Adrenal gland (tissue), 19 donors: ENCODE measurements at regions of chr10 and their contacts with region 1.

Region 1: GRCh38 chr10:12720217-12720981 is 281.1 kb downstream of the CCDC3 start:
- DNase-seq: peak; percentile 44 to 91 (median 80)
- H3K4me3 ChIP-seq: no peak overlapping the region
- H3K27ac ChIP-seq: peak overlapping the region in 2 of 5 donors; percentile 3 to 57
- H3K4me1 ChIP-seq: peaks cover 9 to 22% of the 10 kb centered on the region in 2 donors
- H3K27me3 ChIP-seq: no peaks in the 10 kb centered on the region
- CTCF ChIP-seq: no peak
- POLR2A ChIP-seq: no peak

Region 2: GRCh38 chr10:12902135-12902572 is 181.8 kb after region 1 on chr10:
- intact Hi-C with region 1: loop called in 1 of 2 experiments (anchors 5 kb)
- DNase-seq: peak; percentile 21 to 77 (median 50)
- H3K4me3 ChIP-seq: no peak overlapping the region
- H3K27ac ChIP-seq: no peak overlapping the region
- H3K4me1 ChIP-seq: peaks cover 0 to 3% of the 10 kb centered on the region in 2 donors
- H3K27me3 ChIP-seq: no peaks in the 10 kb centered on the region
- CTCF ChIP-seq: peak; percentile 51 to 73 (median 64)
- POLR2A ChIP-seq: no peak

Region 3: GRCh38 chr10:13087986-13088618 is 367.7 kb after region 1 on chr10:
- intact Hi-C with region 1: loop called in 1 of 2 experiments (anchors 10 kb)
- DNase-seq: no peak
- H3K4me3 ChIP-seq: no peak overlapping the region
- H3K27ac ChIP-seq: peak overlapping the region in 1 of 5 donors; percentile 43
- H3K4me1 ChIP-seq: peaks cover 12 to 25% of the 10 kb centered on the region in 2 donors
- H3K27me3 ChIP-seq: no peaks in the 10 kb centered on the region
- CTCF ChIP-seq: no peak
- POLR2A ChIP-seq: no peak